HAP-1 (cell line): ENCODE measurements at regions of chr9 and their contacts with region 1.

Region 1: GRCh38 chr9:84947363-84947972 is 277.9 kb downstream of the NTRK2 start:
- DNase-seq: no peak
- H3K4me3 ChIP-seq: no peak overlapping the region
- H3K4me1 ChIP-seq: no peaks in the 10 kb centered on the region
- H3K27me3 ChIP-seq: no peaks in the 10 kb centered on the region

Region 2: GRCh38 chr9:84170521-84171141 is 776.8 kb before region 1 on chr9:
- in situ Hi-C with region 1: no loop called
- DNase-seq: no peak
- H3K4me3 ChIP-seq: no peak overlapping the region
- H3K4me1 ChIP-seq: no peaks in the 10 kb centered on the region
- H3K27me3 ChIP-seq: no peaks in the 10 kb centered on the region

Region 3: DNA sequence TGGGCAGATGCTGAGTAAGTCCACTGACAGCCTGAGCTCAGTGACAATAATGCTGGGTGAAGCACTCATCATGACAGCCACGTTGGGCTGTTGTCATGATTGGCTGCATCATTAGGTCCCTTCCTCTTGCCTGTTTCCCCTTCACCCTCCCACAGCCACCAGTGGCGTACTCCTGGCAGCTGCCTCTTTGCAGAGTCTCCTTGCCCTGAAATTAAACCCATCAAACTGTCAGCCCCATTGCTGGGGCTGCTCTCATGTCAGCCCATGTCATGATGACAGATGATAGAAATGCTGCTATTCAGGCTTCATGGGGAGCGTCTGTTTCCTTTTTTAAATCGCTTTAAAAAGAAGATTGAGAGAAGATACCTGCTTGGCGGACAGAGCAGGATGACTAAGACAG is 466.9 kb after region 1 on chr9:
- in situ Hi-C with region 1: loop called (anchors 10 kb)
- DNase-seq: no peak
- H3K4me3 ChIP-seq: no peak overlapping the region
- H3K4me1 ChIP-seq: no peaks in the 10 kb centered on the region
- H3K27me3 ChIP-seq: no peaks in the 10 kb centered on the region